ENCODE measurements at regions of chr10 and their contacts with region 1.

Region 1: GRCh38 chr10:102713814-102714620 is at the start of gene ARL3:
- DNase-seq: peak; percentile 99
- H3K4me3 ChIP-seq: peak within 1 kb of the TSS; percentile 87 to 98 (median 88)
- H3K27ac ChIP-seq: peak within 1 kb of the TSS; percentile 86 to 92 (median 90)
- H3K4me1 ChIP-seq: peaks cover 19 to 52% (median 42%) of the 10 kb centered on the region in 4 donors
- H3K27me3 ChIP-seq: no peaks in the 10 kb centered on the region
- CTCF ChIP-seq: peak in 2 of 3 experiments; percentile 36 to 62
- EP300 ChIP-seq: no peak
- POLR2A ChIP-seq: peak; percentile 50
- total RNA-seq, gene ARL3: 7.9 to 9.8 (median 8.4) TPM

Region 2: GRCh38 chr10:102436312-102436711 is 277.7 kb before region 1 on chr10:
- intact Hi-C with region 1: no loop called
- DNase-seq: no peak
- H3K4me3 ChIP-seq: peak overlapping the region in 2 of 4 donors; percentile 23 to 43
- H3K27ac ChIP-seq: no peak overlapping the region
- H3K4me1 ChIP-seq: peaks cover 12 to 34% (median 23%) of the 10 kb centered on the region in 4 donors
- H3K27me3 ChIP-seq: peaks cover 0 to 39% (median 4%) of the 10 kb centered on the region in 4 donors
- CTCF ChIP-seq: no peak
- EP300 ChIP-seq: no peak
- POLR2A ChIP-seq: no peak

Region 3: GRCh38 chr10:102641880-102642735 is 71.9 kb before region 1 on chr10:
- intact Hi-C with region 1: loop called (anchors 5 kb)
- DNase-seq: peak; percentile 100
- H3K4me3 ChIP-seq: peak overlapping the region; percentile 76 to 97 (median 88)
- H3K27ac ChIP-seq: peak overlapping the region; percentile 99 to 100 (median 100)
- H3K4me1 ChIP-seq: peaks cover 10 to 26% (median 21%) of the 10 kb centered on the region in 4 donors
- H3K27me3 ChIP-seq: no peaks in the 10 kb centered on the region
- CTCF ChIP-seq: no peak
- EP300 ChIP-seq: no peak
- POLR2A ChIP-seq: peak; percentile 87

Region 4: GRCh38 chr10:102682416-102682815 is 31.6 kb before region 1 on chr10:
- intact Hi-C with region 1: no loop called
- DNase-seq: no peak
- H3K4me3 ChIP-seq: no peak overlapping the region
- H3K27ac ChIP-seq: no peak overlapping the region
- H3K4me1 ChIP-seq: peaks cover 18 to 21% (median 21%) of the 10 kb centered on the region in 4 donors
- H3K27me3 ChIP-seq: no peaks in the 10 kb centered on the region
- CTCF ChIP-seq: no peak
- EP300 ChIP-seq: no peak
- POLR2A ChIP-seq: no peak